Psoas muscle (tissue), 8 donors: ENCODE measurements at regions of chr1 and their contacts with region 1.

Region 1: GRCh38 chr1:244092293-244092963 is 41.3 kb downstream of the ZBTB18 start:
- DNase-seq: no peak
- ATAC-seq: no peak
- H3K4me3 ChIP-seq: no peak overlapping the region
- H3K27ac ChIP-seq: no peak overlapping the region
- H3K4me1 ChIP-seq: no peaks in the 10 kb centered on the region
- H3K27me3 ChIP-seq: peaks cover 0 to 5% (median 0%) of the 10 kb centered on the region in 3 donors
- CTCF ChIP-seq: no peak

Region 2: GRCh38 chr1:244137725-244138124 is 45.3 kb after region 1 on chr1:
- intact Hi-C with region 1: loop called in 1 of 2 experiments (anchors 5 kb)
- DNase-seq: no peak
- ATAC-seq: no peak
- H3K4me3 ChIP-seq: no peak overlapping the region
- H3K27ac ChIP-seq: peak overlapping the region; percentile 46
- H3K4me1 ChIP-seq: no peaks in the 10 kb centered on the region
- H3K27me3 ChIP-seq: no peaks in the 10 kb centered on the region
- CTCF ChIP-seq: no peak

Region 3: GRCh38 chr1:244353551-244354091 is 261.2 kb after region 1 on chr1:
- intact Hi-C with region 1: no loop called
- DNase-seq: peak; percentile 57 to 69
- ATAC-seq: peak; percentile 46 to 84 (median 76)
- H3K4me3 ChIP-seq: no peak overlapping the region
- H3K27ac ChIP-seq: peak overlapping the region; percentile 50
- H3K4me1 ChIP-seq: no peaks in the 10 kb centered on the region
- H3K27me3 ChIP-seq: no peaks in the 10 kb centered on the region
- CTCF ChIP-seq: no peak